Cardiac septum (tissue), 1 donor: ENCODE measurements at regions of chr21 and their contacts with region 1.

Region 1: DNA sequence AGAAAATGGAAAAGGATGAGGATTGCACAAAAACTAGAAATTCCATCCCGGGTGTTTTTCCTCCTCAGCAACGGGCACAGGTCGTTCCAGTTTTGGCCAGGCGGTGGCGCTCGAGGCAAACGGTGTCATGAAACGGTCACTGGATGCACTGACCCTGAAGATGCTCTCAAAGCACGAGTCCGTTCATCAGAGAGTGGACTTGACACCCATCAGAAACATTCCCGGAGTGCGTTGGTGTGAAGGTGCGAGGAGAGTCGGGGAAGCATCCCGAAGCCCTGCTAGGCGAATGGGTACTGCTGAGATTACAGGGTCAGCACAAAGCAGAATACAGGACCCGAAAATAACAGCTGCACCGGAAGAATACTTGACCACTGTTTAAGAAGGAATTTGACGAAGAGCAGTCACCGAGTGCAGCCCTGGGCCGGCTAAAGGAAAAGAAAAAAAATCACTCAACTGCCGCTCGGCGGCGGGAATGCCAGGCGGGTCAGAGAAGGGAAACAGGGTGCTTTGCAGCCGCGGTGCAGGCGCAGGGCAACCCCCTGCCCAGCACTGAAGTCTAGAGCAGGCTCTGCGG is 71.7 kb upstream of the ETS2 start:
- DNase-seq: peak; percentile 95

Region 2: DNA sequence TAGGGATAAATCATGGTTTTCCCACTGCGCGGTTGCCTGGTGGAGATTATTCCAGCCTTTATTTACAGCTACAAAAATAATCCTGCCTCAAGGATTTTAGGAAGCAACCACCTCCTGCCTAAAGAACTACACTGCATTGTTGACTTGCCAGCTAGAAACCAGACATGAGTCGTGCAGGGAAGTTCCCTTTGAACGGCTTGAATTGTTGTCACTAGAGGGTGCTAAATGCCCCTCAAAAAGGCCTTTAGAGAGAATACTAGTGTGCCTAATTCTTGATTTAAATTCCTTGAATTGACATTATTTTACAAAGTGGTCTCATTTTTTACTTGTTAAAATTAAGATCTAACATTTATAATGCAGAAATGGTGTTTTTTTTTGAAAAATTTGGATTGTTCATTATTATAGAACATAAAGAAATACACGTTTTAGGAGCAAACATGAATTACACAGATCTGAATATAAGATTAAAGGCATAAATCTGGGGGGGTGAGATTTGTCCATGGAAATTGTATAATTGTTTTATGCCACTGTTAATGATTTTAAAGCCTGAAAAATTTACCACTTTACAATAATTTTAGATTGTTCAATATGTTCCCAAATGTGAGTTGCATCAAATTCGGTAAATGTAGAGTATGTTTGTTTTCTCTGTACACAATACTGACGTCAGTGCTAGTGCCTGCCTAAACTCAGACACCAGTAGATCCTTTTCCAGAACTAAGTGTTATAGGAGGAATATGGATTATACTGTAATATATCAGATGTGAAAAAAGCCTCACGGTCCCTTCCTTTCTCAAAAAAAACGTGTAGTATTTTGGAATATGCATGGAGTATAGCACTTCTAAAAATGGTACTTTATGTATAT is 228.2 kb before region 1 on chr21:
- intact Hi-C with region 1: loop called (anchors 5 kb)
- DNase-seq: no peak

Region 3: DNA sequence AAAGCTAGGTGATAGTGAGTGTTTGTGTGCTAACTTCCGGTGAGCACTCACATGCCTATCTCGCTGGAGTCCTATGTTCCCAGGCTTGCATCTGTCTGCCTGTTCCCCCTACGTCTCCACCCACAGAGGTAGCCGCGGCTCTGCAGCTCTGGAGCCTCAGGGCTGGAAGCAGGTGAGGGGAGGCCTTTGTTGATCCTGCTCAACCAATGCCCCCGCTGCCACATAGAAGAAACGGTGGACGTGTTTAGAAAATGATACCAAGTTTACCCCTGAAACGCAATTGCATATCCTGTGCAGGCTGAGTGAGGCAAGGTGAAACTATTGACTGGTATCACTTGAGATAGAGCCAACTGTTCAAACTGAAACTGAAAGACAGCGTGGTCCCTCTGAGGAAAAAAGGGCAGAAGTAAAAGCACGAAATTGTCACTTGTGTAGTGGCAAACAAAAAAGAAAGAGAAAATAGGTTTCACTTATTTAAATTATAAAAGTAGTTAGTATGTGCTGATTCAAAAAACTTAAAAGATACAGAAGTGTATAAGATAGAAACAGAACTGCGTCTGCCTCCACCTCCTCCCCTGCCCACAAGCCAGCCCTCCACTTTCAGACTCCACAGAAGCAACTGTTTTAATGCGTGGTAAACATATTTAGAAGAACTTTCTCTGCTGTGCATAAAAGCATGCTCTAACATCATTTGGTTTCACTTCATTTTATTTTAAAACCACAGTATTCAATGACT is 33.1 kb after region 1 on chr21:
- intact Hi-C with region 1: no loop called
- DNase-seq: no peak

Region 4: GRCh38 chr21:38979228-38980121 is 245.4 kb after region 1 on chr21:
- intact Hi-C with region 1: no loop called
- DNase-seq: no peak

Region 5: DNA sequence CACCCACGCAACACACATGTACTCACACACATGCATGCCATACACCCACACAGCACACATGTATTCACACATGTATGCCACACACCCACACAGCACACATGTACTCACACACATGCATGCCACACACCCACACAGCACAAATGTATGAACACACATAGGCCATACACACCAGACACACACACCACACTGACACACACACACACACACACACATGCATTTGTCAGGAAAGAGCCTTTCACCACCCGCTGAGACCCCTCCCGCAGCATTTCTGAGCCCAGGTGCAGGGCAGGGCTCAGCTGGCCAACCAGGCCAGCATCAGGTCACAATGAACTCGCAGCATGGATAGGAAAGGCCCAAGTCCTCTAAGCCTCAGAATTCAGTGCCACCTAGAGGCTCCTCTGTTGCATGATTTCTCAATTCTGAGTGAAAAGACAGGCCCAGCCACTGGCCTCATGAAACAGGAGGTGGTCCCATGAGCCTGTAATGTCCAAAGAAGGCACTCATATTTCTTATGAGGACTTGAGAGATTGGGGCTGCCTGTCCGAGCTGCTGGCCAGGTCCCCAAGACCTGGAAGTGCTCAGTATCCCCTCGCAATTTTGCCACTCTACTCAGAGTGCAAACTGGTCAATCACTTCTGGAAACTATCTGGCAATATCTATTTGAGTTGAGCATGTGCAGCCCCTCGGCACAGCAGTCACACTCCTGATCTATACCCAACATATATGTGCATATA is 391.9 kb after region 1 on chr21:
- intact Hi-C with region 1: loop called (anchors 2 kb)
- DNase-seq: no peak

Region 6: GRCh38 chr21:39137248-39138178 is 403.5 kb after region 1 on chr21:
- intact Hi-C with region 1: loop called (anchors 2 kb)
- DNase-seq: no peak